ENCODE measurements at regions of chr12 and their contacts with region 1.

Region 1: DNA sequence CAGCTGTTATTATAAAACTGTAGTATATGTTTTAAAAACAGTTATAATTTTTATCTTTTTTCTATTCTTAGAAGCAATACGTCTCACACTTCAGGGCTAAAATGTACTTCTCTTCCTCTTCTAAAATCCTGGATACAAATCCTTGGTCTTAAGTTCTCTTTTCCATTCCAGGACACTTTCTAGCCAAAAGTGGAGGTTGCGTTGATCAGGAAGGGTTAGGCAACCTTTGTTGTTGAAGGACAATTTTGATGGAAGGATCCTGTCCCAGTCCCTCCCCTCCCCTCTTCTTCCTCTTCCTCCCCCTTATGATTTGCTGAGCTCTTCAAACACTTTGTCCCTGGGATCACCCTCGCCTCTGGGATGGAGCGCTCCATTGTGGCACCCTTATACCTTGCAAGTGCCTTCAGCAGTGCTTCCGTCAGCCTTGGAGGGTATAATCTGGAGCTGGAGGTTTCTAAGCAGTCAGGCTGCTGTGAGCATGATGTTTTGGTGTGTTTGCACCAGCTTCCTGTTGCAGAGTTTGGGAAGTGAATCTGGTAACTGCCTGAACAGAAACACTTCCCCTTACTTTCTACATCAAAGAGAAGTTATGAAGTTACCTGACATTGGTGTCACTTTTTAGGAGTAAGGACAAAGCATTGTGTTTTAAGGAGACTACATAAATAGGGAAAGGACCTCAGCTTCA is 87.4 kb upstream of the SLC38A2 start:
- DNase-seq: no peak
- H3K4me3 Mint-ChIP-seq: peak overlapping the region; percentile 88
- H3K27ac Mint-ChIP-seq: peak overlapping the region; percentile 99
- H3K4me1 Mint-ChIP-seq: peaks cover 61% of the 10 kb centered on the region
- H3K27me3 Mint-ChIP-seq: no peaks in the 10 kb centered on the region

Region 2: GRCh38 chr12:46179683-46180452 is 280.1 kb before region 1 on chr12:
- intact Hi-C with region 1: no loop called
- DNase-seq: no peak
- H3K4me3 Mint-ChIP-seq: no peak overlapping the region
- H3K27ac Mint-ChIP-seq: peak overlapping the region; percentile 13
- H3K4me1 Mint-ChIP-seq: peaks cover 33% of the 10 kb centered on the region
- H3K27me3 Mint-ChIP-seq: no peaks in the 10 kb centered on the region

Region 3: GRCh38 chr12:46209914-46210872 is 249.8 kb before region 1 on chr12:
- intact Hi-C with region 1: loop called (anchors 5 kb)
- DNase-seq: peak; percentile 31
- H3K4me3 Mint-ChIP-seq: peak overlapping the region; percentile 52
- H3K27ac Mint-ChIP-seq: peak overlapping the region; percentile 96
- H3K4me1 Mint-ChIP-seq: peaks cover 64% of the 10 kb centered on the region
- H3K27me3 Mint-ChIP-seq: no peaks in the 10 kb centered on the region

Region 4: GRCh38 chr12:46268590-46269558 is 191.1 kb before region 1 on chr12 and contains the start of gene SLC38A1:
- intact Hi-C with region 1: loop called (anchors 1 kb)
- DNase-seq: peak; percentile 85
- H3K4me3 Mint-ChIP-seq: no peak within 1 kb of the TSS
- H3K27ac Mint-ChIP-seq: no peak within 1 kb of the TSS
- H3K4me1 Mint-ChIP-seq: peaks cover 28% of the 10 kb centered on the region
- H3K27me3 Mint-ChIP-seq: no peaks in the 10 kb centered on the region
- total RNA-seq, gene SLC38A1: 172 and 182 TPM in 2 replicates

Region 5: GRCh38 chr12:46473634-46474329 is 13.8 kb after region 1 on chr12:
- intact Hi-C with region 1: loop called (anchors 1 kb)
- DNase-seq: no peak
- H3K4me3 Mint-ChIP-seq: peak overlapping the region; percentile 51
- H3K27ac Mint-ChIP-seq: peak overlapping the region; percentile 65
- H3K4me1 Mint-ChIP-seq: peaks cover 42% of the 10 kb centered on the region
- H3K27me3 Mint-ChIP-seq: no peaks in the 10 kb centered on the region

Region 6: GRCh38 chr12:46523863-46524770 is 64.1 kb after region 1 on chr12:
- intact Hi-C with region 1: loop called (anchors 1 kb)
- DNase-seq: peak; percentile 48
- H3K4me3 Mint-ChIP-seq: peak overlapping the region; percentile 81
- H3K27ac Mint-ChIP-seq: peak overlapping the region; percentile 99
- H3K4me1 Mint-ChIP-seq: peaks cover 52% of the 10 kb centered on the region
- H3K27me3 Mint-ChIP-seq: no peaks in the 10 kb centered on the region

Region 7: GRCh38 chr12:46661110-46661845 is 201.3 kb after region 1 on chr12:
- intact Hi-C with region 1: loop called (anchors 2 kb)
- DNase-seq: no peak
- H3K4me3 Mint-ChIP-seq: no peak overlapping the region
- H3K27ac Mint-ChIP-seq: no peak overlapping the region
- H3K4me1 Mint-ChIP-seq: peaks cover 54% of the 10 kb centered on the region
- H3K27me3 Mint-ChIP-seq: no peaks in the 10 kb centered on the region